ENCODE measurements at regions of chr17 and their contacts with region 1.

Region 1: GRCh38 chr17:64025732-64026294 is 5.4 kb upstream of the ICAM2 start:
- DNase-seq: peak; percentile 65 to 78
- H3K4me3 ChIP-seq: no peak overlapping the region
- H3K27ac ChIP-seq: no peak overlapping the region
- H3K4me1 ChIP-seq: no peaks in the 10 kb centered on the region
- H3K27me3 ChIP-seq: peaks cover 0 to 11% of the 10 kb centered on the region in 2 donors
- CTCF ChIP-seq: peak; percentile 78 to 86

Region 2: GRCh38 chr17:63929860-63930766 is 95.7 kb before region 1 on chr17:
- intact Hi-C with region 1: loop called (anchors 10 kb)
- DNase-seq: peak in 1 of 2 donors; percentile 47
- H3K4me3 ChIP-seq: no peak overlapping the region
- H3K27ac ChIP-seq: no peak overlapping the region
- H3K4me1 ChIP-seq: peaks cover 0 to 6% (median 0%) of the 10 kb centered on the region in 4 donors
- H3K27me3 ChIP-seq: peaks cover 0 to 12% of the 10 kb centered on the region in 2 donors
- CTCF ChIP-seq: no peak

Region 3: DNA sequence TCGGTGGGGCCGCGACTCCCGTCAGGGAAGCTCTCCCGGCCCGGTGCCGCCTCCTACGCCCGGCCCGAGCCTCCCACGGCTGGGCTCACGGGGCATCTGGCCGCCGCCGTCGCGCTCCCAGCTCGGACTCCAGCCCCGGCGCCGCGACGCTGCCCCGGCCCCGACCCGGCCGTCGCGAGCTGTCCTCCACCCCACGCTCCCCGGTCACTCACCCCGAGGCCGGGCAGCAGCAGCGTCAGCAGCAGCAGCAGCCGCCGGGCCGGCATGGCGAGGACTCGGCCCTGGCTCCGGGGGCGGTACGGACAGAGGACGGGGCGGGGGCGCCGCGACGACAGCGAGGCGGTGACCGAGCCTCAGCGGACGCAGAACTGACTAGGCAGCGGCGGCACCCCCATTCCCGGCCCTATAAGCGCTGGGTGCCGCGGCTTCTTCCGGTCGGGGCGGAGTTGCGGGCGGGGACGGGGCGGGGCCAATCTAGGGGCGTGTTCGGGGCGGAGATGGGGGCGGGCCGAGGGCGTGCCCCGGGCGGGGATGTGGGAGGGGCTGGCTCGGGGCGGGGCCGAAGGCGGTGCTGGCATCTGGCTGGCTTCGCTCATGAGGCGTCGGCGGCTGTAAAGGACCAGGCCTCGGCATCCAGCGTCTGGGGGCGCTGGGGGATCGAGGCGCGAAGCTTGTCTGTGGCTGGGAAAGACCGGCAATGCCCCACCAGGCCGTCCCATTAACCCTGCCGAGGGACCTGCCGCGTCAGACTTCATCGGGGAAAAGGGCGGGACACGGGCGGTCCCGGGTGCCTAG is 104.1 kb after region 1 on chr17 and contains the start of gene ERN1:
- intact Hi-C with region 1: loop called (anchors 5 kb)
- DNase-seq: peak; percentile 93 to 96
- H3K4me3 ChIP-seq: peak within 1 kb of the TSS; percentile 92 to 95
- H3K27ac ChIP-seq: peak within 1 kb of the TSS; percentile 98 to 99
- H3K4me1 ChIP-seq: peaks cover 0 to 36% (median 15%) of the 10 kb centered on the region in 4 donors
- H3K27me3 ChIP-seq: no peaks in the 10 kb centered on the region
- CTCF ChIP-seq: no peak

Region 4: GRCh38 chr17:64281962-64282727 is 256.3 kb after region 1 on chr17:
- intact Hi-C with region 1: loop called (anchors 10 kb)
- DNase-seq: peak in 1 of 2 donors; percentile 64
- H3K4me3 ChIP-seq: no peak overlapping the region
- H3K27ac ChIP-seq: no peak overlapping the region
- H3K4me1 ChIP-seq: peaks cover 0 to 6% (median 0%) of the 10 kb centered on the region in 4 donors
- H3K27me3 ChIP-seq: no peaks in the 10 kb centered on the region
- CTCF ChIP-seq: peak; percentile 64 to 76

Measured in tibial artery (tissue), 4 donors.